ENCODE measurements at regions of chr17 and their contacts with region 1.

Region 1: DNA sequence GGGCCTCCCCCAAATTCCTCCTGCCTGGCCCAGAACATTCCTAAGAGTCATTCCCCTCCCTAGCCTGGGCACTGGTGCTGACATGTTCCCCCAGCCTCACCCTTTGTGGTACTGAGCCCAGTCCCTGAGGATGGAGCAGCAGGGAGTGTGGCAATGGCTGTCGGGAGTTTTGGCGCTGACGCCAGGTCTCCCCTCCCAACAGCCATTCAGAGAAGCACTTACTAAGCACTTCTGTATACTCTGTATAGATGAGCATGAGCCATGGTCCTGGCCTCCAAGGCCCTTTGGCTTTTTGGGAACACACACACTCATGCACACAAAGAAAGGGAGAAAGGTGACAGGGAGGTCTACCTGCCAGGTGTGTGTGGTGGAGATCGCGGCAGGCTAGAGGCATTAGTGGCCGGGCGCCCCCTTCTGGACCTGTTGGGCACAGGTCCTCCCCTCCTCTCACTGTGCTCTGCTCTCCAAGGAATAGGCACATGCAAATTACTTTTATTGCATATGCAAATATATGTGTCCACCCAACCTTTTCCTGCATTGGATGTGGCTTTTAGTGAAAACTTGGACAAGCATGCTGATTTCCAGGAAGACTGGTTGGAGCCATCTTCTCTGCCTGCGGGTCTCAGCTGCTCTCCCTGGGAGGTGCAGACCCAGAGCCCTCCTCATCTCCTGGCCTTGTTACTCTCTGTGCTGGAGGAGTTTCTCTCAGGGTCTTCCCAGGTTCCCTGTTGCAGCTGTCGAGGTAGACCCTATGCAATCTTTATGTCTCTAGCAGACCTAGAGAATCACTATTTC is 17.4 kb upstream of the C17orf107 start:
- DNase-seq: peak; percentile 12
- ATAC-seq: peak; percentile 84
- H3K4me3 ChIP-seq: no peak overlapping the region
- H3K27ac ChIP-seq: no peak overlapping the region
- H3K4me1 ChIP-seq: no peaks in the 10 kb centered on the region
- H3K27me3 ChIP-seq: no peaks in the 10 kb centered on the region
- CTCF ChIP-seq: peak; percentile 70
- POLR2A ChIP-seq: no peak
- RAD21 ChIP-seq: peak; percentile 77

Region 2: DNA sequence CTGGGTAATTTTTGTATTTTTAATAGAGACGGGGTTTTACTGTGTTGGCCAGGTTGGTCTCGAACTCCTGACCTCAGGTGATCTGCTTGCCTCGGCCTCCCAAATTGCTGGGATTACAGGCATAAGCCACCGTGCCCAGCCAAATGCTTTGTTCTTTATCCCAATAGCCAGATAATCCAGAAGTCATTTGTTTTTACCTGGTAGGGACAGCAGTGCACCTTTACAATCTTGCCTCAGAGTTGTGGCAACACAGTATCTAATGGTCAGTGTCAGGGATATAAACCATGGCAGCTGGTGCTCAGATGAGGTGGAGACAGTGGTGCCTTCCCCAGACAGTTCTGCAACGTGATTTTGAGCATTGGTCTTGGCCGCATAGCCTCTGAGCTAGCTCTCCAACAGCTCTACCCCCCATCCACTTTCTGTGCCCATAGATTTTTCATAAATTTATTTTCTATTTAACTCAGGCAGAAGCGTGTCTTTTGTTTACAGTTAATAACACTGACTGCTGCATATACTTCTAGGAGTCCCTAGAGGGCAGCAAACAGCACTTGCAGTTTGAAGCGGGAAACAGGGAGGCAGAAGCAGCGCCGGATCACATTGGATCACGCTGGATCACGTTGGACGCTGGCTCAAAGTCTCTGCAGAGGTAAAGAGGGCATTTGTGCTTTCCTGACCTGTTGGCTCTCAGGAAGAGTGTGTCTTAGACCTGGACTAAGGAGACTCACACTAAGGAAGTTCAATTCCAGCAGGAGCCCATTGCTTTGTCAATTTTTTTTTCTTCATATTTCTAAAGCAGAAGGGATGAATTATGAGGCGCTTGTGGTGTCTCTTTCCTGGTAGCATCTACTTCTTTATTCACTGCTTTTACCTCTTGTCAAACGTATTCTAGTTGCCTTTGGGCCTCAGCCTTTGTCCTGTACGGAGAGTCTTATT is 316.5 kb before region 1 on chr17:
- CTCF ChIA-PET with region 1: no interaction called
- POLR2A ChIA-PET with region 1: no interaction called
- dilution Hi-C with region 1: no loop called
- in situ Hi-C with region 1: loop called (anchors 10 kb)
- intact Hi-C with region 1: loop called (anchors 10 kb)
- DNase-seq: peak; percentile 75
- ATAC-seq: peak; percentile 90
- H3K4me3 ChIP-seq: no peak overlapping the region
- H3K27ac ChIP-seq: no peak overlapping the region
- H3K4me1 ChIP-seq: no peaks in the 10 kb centered on the region
- H3K27me3 ChIP-seq: peaks cover 13% of the 10 kb centered on the region
- CTCF ChIP-seq: peak; percentile 85
- POLR2A ChIP-seq: no peak
- RAD21 ChIP-seq: peak; percentile 62

Region 3: DNA sequence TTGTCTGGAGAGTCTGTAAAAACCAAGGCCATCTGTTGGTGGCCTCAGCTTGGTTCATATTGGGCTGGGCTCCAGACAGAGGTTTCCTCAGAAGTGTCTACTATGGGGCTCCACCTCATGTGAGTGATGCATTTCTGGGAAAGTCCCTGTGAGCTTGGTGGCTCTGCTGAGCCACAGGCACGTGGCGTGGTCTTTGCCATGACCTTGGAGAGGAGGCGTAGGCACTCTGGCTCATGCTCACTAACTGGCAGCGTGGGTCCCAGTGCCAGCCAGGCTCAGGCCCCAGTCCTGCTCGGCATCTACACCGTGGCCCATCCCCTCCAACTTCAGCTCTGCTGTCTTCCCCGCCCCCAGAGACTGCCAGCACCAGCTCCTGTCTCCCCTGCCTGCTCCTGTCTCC is 308.3 kb before region 1 on chr17:
- CTCF ChIA-PET with region 1: no interaction called
- POLR2A ChIA-PET with region 1: no interaction called
- dilution Hi-C with region 1: no loop called
- in situ Hi-C with region 1: loop called (anchors 10 kb)
- intact Hi-C with region 1: loop called (anchors 10 kb)
- DNase-seq: no peak
- ATAC-seq: no peak
- H3K4me3 ChIP-seq: no peak overlapping the region
- H3K27ac ChIP-seq: no peak overlapping the region
- H3K4me1 ChIP-seq: peaks cover 1% of the 10 kb centered on the region; the same call in 1 of the 2 replicates
- H3K27me3 ChIP-seq: peaks cover 42% of the 10 kb centered on the region
- CTCF ChIP-seq: no peak
- POLR2A ChIP-seq: no peak
- RAD21 ChIP-seq: no peak

Region 4: DNA sequence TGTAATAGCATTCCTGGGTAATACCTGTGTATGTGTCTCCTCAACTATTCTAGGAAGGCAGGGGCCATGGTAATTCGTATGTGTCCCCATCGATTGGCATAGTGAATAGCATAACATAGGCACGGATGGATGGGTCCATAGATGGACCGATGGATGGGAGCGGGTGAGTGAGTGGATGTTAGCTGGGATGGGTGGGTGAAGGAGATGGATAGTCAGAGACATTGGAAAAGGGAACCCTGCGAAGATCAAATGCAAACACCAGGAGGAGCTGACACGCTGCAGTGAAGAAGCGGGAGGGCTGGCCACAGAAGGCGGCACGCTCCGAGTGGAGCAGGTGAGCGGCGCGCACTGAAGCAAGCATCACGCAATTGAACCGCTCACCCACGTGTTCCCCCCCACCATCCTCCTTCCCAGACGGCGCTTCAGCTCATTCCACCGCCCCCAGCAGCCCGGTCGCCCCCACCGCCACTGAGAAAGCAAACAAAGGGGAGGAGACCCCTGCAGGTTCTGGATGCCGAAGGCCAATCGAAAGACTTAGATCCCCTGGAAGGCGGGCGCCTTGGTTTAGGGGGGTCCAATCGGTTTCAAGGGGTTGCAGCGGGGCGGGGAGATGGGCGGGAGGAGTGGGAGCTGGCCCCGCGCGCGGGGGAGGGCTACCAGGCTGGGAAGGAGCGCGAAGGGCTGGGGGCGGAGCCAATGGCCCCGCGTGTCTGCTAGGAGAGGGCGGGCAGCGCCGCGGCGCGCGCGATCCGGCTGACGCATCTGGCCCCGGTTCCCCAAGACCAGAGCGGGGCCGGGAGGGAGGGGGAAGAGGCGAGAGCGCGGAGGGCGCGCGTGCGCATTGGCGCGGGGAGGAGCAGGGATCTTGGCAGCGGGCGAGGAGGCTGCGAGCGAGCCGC is 171.9 kb before region 1 on chr17 and contains the start of gene ARRB2:
- CTCF ChIA-PET with region 1: no interaction called
- POLR2A ChIA-PET with region 1: no interaction called
- dilution Hi-C with region 1: no loop called
- in situ Hi-C with region 1: loop called (anchors 10 kb)
- intact Hi-C with region 1: no loop called
- DNase-seq: peak; percentile 98
- ATAC-seq: peak; percentile 96
- H3K4me3 ChIP-seq: peak within 1 kb of the TSS; percentile 49
- H3K27ac ChIP-seq: no peak within 1 kb of the TSS; the same call in 1 of the 2 replicates
- H3K4me1 ChIP-seq: peaks cover 9% of the 10 kb centered on the region
- H3K27me3 ChIP-seq: no peaks in the 10 kb centered on the region
- CTCF ChIP-seq: peak; percentile 77
- POLR2A ChIP-seq: no peak
- RAD21 ChIP-seq: peak; percentile 80
- total RNA-seq, gene ARRB2: 3.9 and 6.1 TPM in 2 replicates

Region 5: GRCh38 chr17:4733073-4733531 is 148.9 kb before region 1 on chr17:
- CTCF ChIA-PET with region 1: no interaction called
- POLR2A ChIA-PET with region 1: no interaction called
- dilution Hi-C with region 1: no loop called
- in situ Hi-C with region 1: no loop called
- intact Hi-C with region 1: loop called (anchors 1 kb)
- DNase-seq: no peak
- ATAC-seq: no peak
- H3K4me3 ChIP-seq: no peak overlapping the region
- H3K27ac ChIP-seq: no peak overlapping the region
- H3K4me1 ChIP-seq: no peaks in the 10 kb centered on the region
- H3K27me3 ChIP-seq: peaks cover 4% of the 10 kb centered on the region
- CTCF ChIP-seq: 0 out of 2 replicates have a peak, but pooled peaks have one; percentile 2
- POLR2A ChIP-seq: no peak
- RAD21 ChIP-seq: no peak

Region 6: GRCh38 chr17:4789901-4790704 is 91.9 kb before region 1 on chr17:
- CTCF ChIA-PET with region 1: interaction called, 6 read pairs
- POLR2A ChIA-PET with region 1: no interaction called
- dilution Hi-C with region 1: no loop called
- in situ Hi-C with region 1: loop called (anchors 5 kb)
- intact Hi-C with region 1: no loop called
- DNase-seq: peak; percentile 93
- ATAC-seq: peak; percentile 95
- H3K4me3 ChIP-seq: peak overlapping the region; percentile 64
- H3K27ac ChIP-seq: peak overlapping the region; percentile 72
- H3K4me1 ChIP-seq: peaks cover 5% of the 10 kb centered on the region; the same call in 1 of the 2 replicates
- H3K27me3 ChIP-seq: peaks cover 15% of the 10 kb centered on the region
- CTCF ChIP-seq: peak; percentile 90
- POLR2A ChIP-seq: peak; percentile 49; the same call in 1 of the 2 replicates
- RAD21 ChIP-seq: peak; percentile 53

Region 7: GRCh38 chr17:4833941-4834680 is 47.8 kb before region 1 on chr17:
- CTCF ChIA-PET with region 1: no interaction called
- POLR2A ChIA-PET with region 1: no interaction called
- dilution Hi-C with region 1: no loop called
- in situ Hi-C with region 1: no loop called
- intact Hi-C with region 1: loop called (anchors 1 kb)
- DNase-seq: peak; percentile 80
- ATAC-seq: peak; percentile 33
- H3K4me3 ChIP-seq: peak overlapping the region; percentile 77
- H3K27ac ChIP-seq: peak overlapping the region; percentile 81
- H3K4me1 ChIP-seq: peaks cover 6% of the 10 kb centered on the region; the same call in 1 of the 2 replicates
- H3K27me3 ChIP-seq: no peaks in the 10 kb centered on the region
- CTCF ChIP-seq: no peak
- POLR2A ChIP-seq: no peak
- RAD21 ChIP-seq: no peak